GM12878 (cell line): ENCODE measurements at regions of chr11 and their contacts with region 1.

Region 1: DNA sequence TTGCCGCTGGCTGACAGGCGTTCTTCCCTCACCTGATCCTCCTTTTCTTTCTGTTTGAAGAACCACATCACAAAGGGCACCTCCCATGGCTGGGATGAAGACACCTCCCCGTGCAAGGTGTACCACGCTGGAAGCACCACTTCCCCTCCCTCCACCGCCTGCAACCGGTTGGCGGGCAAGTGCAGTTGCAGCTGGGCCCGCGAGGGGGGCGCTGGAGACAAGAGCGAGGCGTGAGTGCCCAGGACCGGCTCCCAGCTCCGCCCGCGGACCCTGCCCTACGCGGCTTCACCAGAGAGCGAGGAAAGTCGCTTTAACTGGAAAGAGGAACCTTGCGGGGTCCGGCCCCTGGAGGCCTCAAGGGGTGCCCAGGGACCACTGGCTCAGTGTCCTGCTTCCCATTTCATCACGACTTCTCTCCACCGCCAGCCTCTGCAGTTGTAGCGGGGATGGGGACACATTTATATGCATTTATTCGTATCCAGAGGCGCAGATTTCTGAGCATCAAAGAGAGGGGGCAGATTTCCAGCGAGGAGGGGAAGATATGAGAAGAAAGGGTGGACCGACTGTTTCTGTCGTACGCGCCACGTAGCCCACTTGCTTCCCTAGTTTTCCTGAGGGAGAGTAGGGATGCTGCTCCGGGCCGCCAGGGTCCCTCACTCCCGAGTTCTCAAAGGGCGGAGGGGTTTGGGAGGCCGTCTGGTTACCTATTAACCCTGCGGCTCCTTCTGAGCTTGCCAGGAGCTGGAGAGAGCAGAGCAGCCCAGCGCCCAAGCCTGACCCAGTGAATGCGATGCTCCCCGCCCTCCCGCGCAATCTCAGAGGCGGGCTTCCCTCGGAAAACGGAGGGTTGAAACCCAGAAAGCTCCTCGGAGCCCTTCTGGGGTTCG is 3.5 kb downstream of the ESAM start:
- DNase-seq: no peak
- ATAC-seq: peak; percentile 75
- H3K4me3 ChIP-seq: peak overlapping the region; percentile 83
- H3K27ac ChIP-seq: 0 out of 2 replicates have a peak overlapping the region, but pooled peaks have one; percentile 10
- H3K4me1 ChIP-seq: peaks cover 18% of the 10 kb centered on the region
- H3K27me3 ChIP-seq: no peaks in the 10 kb centered on the region
- CTCF ChIP-seq: peak; percentile 88 to 89 (median 89)
- EP300 ChIP-seq: no peak
- POLR2A ChIP-seq: 0 out of 2 replicates have a peak, but pooled peaks have one; percentile 28
- RAD21 ChIP-seq: peak; percentile 57

Region 2: DNA sequence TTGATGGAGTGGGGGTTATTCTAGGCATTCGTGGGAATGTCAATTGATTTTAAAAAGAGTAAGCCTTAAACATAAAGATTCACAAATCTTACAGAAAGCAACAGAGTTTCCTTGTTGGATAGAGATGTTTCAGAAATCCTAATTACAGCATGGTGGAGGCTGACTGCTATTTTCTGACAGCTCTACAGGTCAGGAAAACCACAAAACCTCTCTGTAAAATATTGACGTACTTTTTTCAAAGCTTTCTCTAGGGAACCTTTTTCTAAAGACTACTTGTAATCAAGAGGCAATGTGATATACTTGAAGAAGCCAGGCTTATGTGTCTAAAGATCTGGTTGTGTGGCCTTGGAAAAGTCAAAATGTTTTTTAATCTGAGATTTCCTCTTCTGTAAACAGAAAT is 304.0 kb before region 1 on chr11:
- CTCF ChIA-PET with region 1: no interaction called
- POLR2A ChIA-PET with region 1: no interaction called
- RAD21 ChIA-PET with region 1: no interaction called
- SMC1A ChIA-PET with region 1: no interaction called
- in situ Hi-C with region 1: no loop called
- intact Hi-C with region 1: no loop called
- DNase-seq: no peak
- ATAC-seq: no peak
- H3K4me3 ChIP-seq: no peak overlapping the region
- H3K27ac ChIP-seq: no peak overlapping the region
- H3K4me1 ChIP-seq: no peaks in the 10 kb centered on the region
- H3K27me3 ChIP-seq: no peaks in the 10 kb centered on the region
- CTCF ChIP-seq: no peak
- EP300 ChIP-seq: no peak
- POLR2A ChIP-seq: no peak
- RAD21 ChIP-seq: no peak

Region 3: GRCh38 chr11:124551189-124551588 is 207.4 kb before region 1 on chr11:
- CTCF ChIA-PET with region 1: no interaction called
- POLR2A ChIA-PET with region 1: no interaction called
- RAD21 ChIA-PET with region 1: no interaction called
- SMC1A ChIA-PET with region 1: no interaction called
- in situ Hi-C with region 1: no loop called
- intact Hi-C with region 1: no loop called
- DNase-seq: no peak
- ATAC-seq: no peak
- H3K4me3 ChIP-seq: no peak overlapping the region
- H3K27ac ChIP-seq: no peak overlapping the region
- H3K4me1 ChIP-seq: no peaks in the 10 kb centered on the region
- H3K27me3 ChIP-seq: no peaks in the 10 kb centered on the region
- CTCF ChIP-seq: no peak
- EP300 ChIP-seq: no peak
- POLR2A ChIP-seq: no peak
- RAD21 ChIP-seq: no peak

Region 4: DNA sequence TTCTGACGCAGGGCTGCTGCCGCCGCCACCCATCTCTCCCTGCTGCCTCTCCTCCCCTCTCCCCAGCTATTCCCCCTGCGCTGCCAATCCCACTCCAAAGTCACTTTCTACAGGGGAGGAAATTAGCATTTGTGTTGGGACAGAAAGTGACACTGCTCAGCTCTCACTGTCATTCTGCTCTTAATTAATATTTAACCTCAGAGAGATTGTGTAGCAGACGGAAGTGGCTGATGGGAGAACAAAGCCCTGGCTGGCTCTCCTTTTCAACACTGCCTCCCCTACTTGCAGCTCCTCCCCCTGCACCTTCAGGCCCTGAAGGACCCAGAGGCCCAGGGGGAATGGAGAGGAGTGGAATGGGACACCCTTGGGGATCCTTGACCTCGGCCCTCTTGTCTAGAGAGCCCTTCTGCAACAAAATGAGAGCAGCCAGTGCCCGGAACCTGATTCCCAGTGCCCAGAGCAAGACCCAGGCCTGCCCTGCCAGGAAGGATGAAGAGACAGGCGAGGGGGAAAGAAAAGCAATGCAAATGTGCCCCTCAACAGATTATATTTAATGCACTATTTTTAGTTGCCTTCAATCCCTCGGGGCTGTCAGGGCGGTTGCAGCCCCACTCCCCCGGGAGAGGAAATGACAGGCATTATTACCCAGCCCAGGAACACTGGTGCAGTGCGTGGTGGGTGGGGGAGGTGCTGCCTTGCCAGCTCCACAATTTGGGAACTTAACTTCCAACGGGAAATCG is 33.4 kb before region 1 on chr11:
- CTCF ChIA-PET with region 1: interaction called, 22 read pairs
- POLR2A ChIA-PET with region 1: interaction called, 10 read pairs
- RAD21 ChIA-PET with region 1: interaction called, 3 read pairs
- SMC1A ChIA-PET with region 1: interaction called, 8 read pairs
- in situ Hi-C with region 1: no loop called
- intact Hi-C with region 1: no loop called
- DNase-seq: peak; percentile 41
- ATAC-seq: peak; percentile 95
- H3K4me3 ChIP-seq: no peak overlapping the region
- H3K27ac ChIP-seq: no peak overlapping the region
- H3K4me1 ChIP-seq: peaks cover 7% of the 10 kb centered on the region
- H3K27me3 ChIP-seq: no peaks in the 10 kb centered on the region; a peak in 2 of 4 replicates
- CTCF ChIP-seq: no peak
- EP300 ChIP-seq: no peak
- POLR2A ChIP-seq: no peak
- RAD21 ChIP-seq: no peak

Region 5: DNA sequence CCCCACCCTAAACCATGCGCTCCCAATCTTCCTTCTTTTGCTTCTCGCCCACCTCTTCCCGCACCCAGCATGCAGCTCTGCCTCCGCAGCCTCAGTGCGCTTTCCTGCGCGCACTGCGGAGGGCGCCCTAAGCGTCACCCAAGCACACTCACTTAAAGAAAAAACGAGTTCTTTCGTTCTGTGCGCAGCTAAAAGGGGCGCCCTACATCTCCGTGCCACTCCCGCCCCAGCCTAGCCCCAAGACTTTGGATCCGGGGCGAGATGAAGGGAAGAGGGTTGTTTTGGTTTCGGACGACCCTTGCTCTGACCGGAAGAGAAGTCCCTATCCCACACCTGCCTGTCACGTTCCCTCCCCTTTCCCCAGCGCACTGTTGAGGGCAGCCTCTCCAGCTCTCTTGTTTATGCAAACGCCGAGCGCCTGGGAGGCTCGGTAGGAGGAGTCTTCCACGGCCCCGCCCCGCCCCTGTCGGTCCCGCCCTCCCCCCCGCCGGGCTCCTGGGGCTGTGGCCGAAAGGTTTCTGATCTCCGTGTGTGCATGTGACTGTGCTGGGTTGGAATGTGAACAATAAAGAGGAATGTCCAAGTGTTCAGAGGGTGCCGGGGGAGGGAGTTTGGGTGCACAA is 11.8 kb before region 1 on chr11:
- CTCF ChIA-PET with region 1: interaction called, 202 read pairs
- POLR2A ChIA-PET with region 1: interaction called, 12 read pairs
- RAD21 ChIA-PET with region 1: interaction called, 34 read pairs
- SMC1A ChIA-PET with region 1: interaction called, 91 read pairs
- in situ Hi-C with region 1: no loop called
- intact Hi-C with region 1: loop called (anchors 1 kb)
- DNase-seq: peak; percentile 53
- ATAC-seq: peak; percentile 94
- H3K4me3 ChIP-seq: peak overlapping the region; percentile 88
- H3K27ac ChIP-seq: peak overlapping the region; percentile 53; the same call in 1 of the 2 replicates
- H3K4me1 ChIP-seq: peaks cover 4% of the 10 kb centered on the region; the same call in 1 of the 2 replicates
- H3K27me3 ChIP-seq: no peaks in the 10 kb centered on the region
- CTCF ChIP-seq: peak; percentile 66 to 79 (median 78)
- EP300 ChIP-seq: no peak
- POLR2A ChIP-seq: peak; percentile 70
- RAD21 ChIP-seq: peak; percentile 47

Region 6: DNA sequence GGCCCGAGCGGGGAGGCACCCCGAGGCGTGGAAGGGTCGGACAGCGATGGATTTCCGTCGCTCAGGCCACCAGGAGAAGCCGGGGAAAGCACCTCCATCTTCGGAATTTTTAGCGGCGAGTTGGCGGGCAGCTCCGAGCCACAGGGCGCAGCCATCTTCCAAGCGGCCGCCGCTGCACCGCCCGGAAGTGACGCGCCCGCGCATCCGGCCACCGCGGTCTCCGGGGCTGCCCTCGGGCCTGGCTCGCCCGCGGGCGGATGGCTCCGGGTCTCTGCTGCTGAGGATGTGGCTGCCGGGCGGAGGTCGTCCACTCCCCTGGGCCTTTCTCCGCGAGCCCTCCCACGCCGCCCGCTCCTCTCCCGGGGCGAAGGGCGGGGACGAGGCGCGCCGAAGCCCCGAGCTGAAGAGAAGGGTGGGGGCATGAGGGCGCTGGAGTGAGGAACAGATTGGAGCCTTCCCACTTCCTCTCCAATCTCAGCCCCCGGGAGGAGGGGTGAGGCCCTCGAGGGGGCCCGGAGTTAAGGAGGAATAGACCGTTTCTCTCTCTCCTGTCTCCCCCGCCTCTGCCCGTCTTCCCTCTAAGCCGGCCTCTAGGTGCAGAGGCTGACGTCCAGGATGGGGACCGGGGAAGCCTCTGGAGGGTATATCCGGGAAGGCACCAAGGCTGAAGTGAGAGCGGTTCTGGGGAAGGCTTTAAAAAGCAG is 41.8 kb after region 1 on chr11 and contains the start of gene MSANTD2:
- CTCF ChIA-PET with region 1: interaction called, 272 read pairs
- POLR2A ChIA-PET with region 1: interaction called, 9 read pairs
- RAD21 ChIA-PET with region 1: interaction called, 35 read pairs
- SMC1A ChIA-PET with region 1: interaction called, 40 read pairs
- in situ Hi-C with region 1: no loop called
- intact Hi-C with region 1: loop called (anchors 2 kb)
- DNase-seq: no peak
- ATAC-seq: peak; percentile 95
- H3K4me3 ChIP-seq: peak within 1 kb of the TSS; percentile 84
- H3K27ac ChIP-seq: peak within 1 kb of the TSS; percentile 94
- H3K4me1 ChIP-seq: peaks cover 9% of the 10 kb centered on the region
- H3K27me3 ChIP-seq: peaks cover 0 to 1% of the 10 kb centered on the region in 2 experiments; a peak in 1 of 4 replicates
- CTCF ChIP-seq: no peak
- EP300 ChIP-seq: 0 out of 4 replicates have a peak, but pooled peaks of 1 of the 2 experiments have one; percentile 15
- POLR2A ChIP-seq: peak; percentile 98
- RAD21 ChIP-seq: no peak
- polyA plus RNA-seq, gene MSANTD2: 3.0 to 4.1 TPM

Region 7: DNA sequence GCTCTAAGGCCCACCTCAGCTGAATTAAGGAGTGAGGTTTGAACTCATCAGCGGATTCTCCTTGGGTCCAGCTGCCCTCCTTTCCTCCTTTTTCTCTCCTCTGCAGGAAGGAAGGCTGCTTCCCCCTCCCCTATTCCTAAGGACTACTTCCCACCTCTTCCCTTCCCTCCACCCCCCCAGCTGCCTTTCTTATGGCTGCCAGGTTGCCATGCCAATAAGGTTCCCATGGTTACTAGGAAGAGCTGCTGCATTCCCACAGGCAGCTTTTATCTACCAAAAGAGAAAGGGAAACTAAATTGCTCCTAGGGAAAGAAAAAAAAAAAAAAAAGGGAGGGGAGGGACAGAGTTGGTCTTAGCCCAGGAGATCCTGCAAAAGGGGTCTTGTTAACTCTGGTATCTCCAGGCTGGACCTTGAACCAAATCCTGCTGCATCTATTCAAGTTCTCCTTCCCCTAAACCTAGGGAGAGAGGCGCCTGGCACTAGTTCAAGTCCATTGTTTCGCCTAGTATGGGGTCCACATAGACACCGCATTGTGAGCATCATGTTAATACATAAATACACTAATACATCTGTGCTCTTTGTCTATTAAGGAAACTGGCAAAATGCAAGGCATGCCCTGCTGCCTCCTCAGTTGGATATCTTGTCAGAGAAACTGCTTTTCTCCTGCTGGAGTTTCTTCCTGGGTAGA is 758.7 kb after region 1 on chr11:
- CTCF ChIA-PET with region 1: no interaction called
- POLR2A ChIA-PET with region 1: no interaction called
- RAD21 ChIA-PET with region 1: no interaction called
- SMC1A ChIA-PET with region 1: no interaction called
- in situ Hi-C with region 1: no loop called
- intact Hi-C with region 1: no loop called
- DNase-seq: no peak
- ATAC-seq: no peak
- H3K4me3 ChIP-seq: no peak overlapping the region
- H3K27ac ChIP-seq: no peak overlapping the region
- H3K4me1 ChIP-seq: peaks cover 43% of the 10 kb centered on the region
- H3K27me3 ChIP-seq: no peaks in the 10 kb centered on the region
- CTCF ChIP-seq: no peak
- EP300 ChIP-seq: no peak
- POLR2A ChIP-seq: no peak
- RAD21 ChIP-seq: no peak